PC-9 (cell line): ENCODE measurements at regions of chr2 and their contacts with region 1.

Region 1: GRCh38 chr2:20225294-20226151 is 593 bp upstream of the SDC1 start:
- DNase-seq: peak; percentile 67 to 88
- H3K4me3 ChIP-seq: peak overlapping the region; percentile 93
- H3K27ac ChIP-seq: peak overlapping the region; percentile 61
- H3K4me1 ChIP-seq: peaks cover 39% of the 10 kb centered on the region
- H3K27me3 ChIP-seq: no peaks in the 10 kb centered on the region
- CTCF ChIP-seq: peak; percentile 75

Region 2: DNA sequence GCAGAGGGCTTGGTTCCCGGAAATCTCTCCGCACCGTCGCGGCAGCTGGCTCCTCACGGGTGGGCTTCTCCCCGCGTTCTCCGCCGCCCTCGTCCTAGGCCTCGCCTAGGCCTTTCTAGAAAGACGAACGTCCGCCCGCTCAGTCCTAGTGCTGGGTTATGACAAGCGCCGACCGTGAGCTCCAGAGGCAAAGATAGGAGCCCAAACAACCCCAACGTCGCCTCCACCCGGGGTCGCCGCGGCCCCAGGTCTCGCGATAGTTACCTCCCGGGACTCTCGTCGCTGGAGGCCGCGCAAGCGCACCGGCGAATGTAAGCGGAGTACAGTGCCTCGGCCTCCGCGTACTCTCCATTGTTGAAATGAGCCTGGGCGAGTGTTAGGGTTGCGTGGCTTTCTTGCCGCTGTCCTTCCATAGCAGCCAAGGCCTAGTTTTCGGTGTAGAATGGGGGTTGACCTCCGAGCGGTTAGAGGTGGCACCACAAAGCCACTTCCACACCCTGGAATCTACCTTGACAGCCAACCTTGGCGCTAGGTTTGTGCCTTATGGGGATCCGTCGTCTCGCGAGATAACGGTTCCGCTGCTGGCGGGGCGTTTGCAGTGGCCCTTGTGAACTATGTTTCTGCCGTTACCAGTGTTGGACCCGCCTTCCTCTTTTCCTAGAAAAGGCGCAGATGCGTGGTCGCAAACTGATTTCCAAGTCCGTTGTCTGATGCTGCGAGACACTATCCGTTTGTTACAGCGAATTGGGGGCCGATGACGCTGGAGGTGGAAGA is 323.9 kb before region 1 on chr2 and contains the start of gene TTC32:
- CTCF ChIA-PET with region 1: no interaction called
- POLR2A ChIA-PET with region 1: no interaction called
- intact Hi-C with region 1: no loop called
- DNase-seq: peak; percentile 84 to 91
- H3K4me3 ChIP-seq: peak within 1 kb of the TSS; percentile 74
- H3K27ac ChIP-seq: peak within 1 kb of the TSS; percentile 88
- H3K4me1 ChIP-seq: peaks cover 41% of the 10 kb centered on the region
- H3K27me3 ChIP-seq: no peaks in the 10 kb centered on the region
- CTCF ChIP-seq: no peak
- total RNA-seq, gene TTC32: 27.9 and 36.2 TPM in 2 replicates

Region 3: GRCh38 chr2:20015472-20016083 is 209.9 kb before region 1 on chr2:
- CTCF ChIA-PET with region 1: no interaction called
- POLR2A ChIA-PET with region 1: no interaction called
- intact Hi-C with region 1: loop called (anchors 5 kb)
- DNase-seq: peak in 1 of 2 experiments; percentile 53
- H3K4me3 ChIP-seq: no peak overlapping the region
- H3K27ac ChIP-seq: no peak overlapping the region
- H3K4me1 ChIP-seq: peaks cover 5% of the 10 kb centered on the region; the same call in 1 of the 2 replicates
- H3K27me3 ChIP-seq: peaks cover 9% of the 10 kb centered on the region; the same call in 1 of the 2 replicates
- CTCF ChIP-seq: peak; percentile 82

Region 4: GRCh38 chr2:20106746-20107145 is 118.8 kb before region 1 on chr2:
- CTCF ChIA-PET with region 1: no interaction called
- POLR2A ChIA-PET with region 1: interaction called, 9 read pairs
- intact Hi-C with region 1: loop called (anchors 2 kb)
- DNase-seq: peak; percentile 70 to 83
- H3K4me3 ChIP-seq: peak overlapping the region; percentile 68
- H3K27ac ChIP-seq: peak overlapping the region; percentile 32; the same call in 1 of the 2 replicates
- H3K4me1 ChIP-seq: peaks cover 45% of the 10 kb centered on the region
- H3K27me3 ChIP-seq: no peaks in the 10 kb centered on the region
- CTCF ChIP-seq: peak; percentile 92

Region 5: GRCh38 chr2:20179755-20180594 is 45.5 kb before region 1 on chr2:
- CTCF ChIA-PET with region 1: interaction called, 11 read pairs
- POLR2A ChIA-PET with region 1: interaction called, 3 read pairs
- intact Hi-C with region 1: loop called (anchors 2 kb)
- DNase-seq: peak in 1 of 2 experiments; percentile 80
- H3K4me3 ChIP-seq: no peak overlapping the region
- H3K27ac ChIP-seq: no peak overlapping the region
- H3K4me1 ChIP-seq: peaks cover 28% of the 10 kb centered on the region
- H3K27me3 ChIP-seq: no peaks in the 10 kb centered on the region
- CTCF ChIP-seq: no peak

Region 6: GRCh38 chr2:20186078-20186854 is 39.3 kb before region 1 on chr2:
- CTCF ChIA-PET with region 1: interaction called, 10 read pairs
- POLR2A ChIA-PET with region 1: interaction called, 9 read pairs
- intact Hi-C with region 1: loop called (anchors 2 kb)
- DNase-seq: peak; percentile 74 to 93
- H3K4me3 ChIP-seq: peak overlapping the region; percentile 54
- H3K27ac ChIP-seq: peak overlapping the region; percentile 92
- H3K4me1 ChIP-seq: peaks cover 59% of the 10 kb centered on the region
- H3K27me3 ChIP-seq: no peaks in the 10 kb centered on the region
- CTCF ChIP-seq: no peak

Region 7: GRCh38 chr2:20207051-20207450 is 18.5 kb before region 1 on chr2:
- CTCF ChIA-PET with region 1: interaction called, 4 read pairs
- POLR2A ChIA-PET with region 1: interaction called, 3 read pairs
- intact Hi-C with region 1: loop called (anchors 2 kb)
- DNase-seq: no peak
- H3K4me3 ChIP-seq: no peak overlapping the region
- H3K27ac ChIP-seq: no peak overlapping the region
- H3K4me1 ChIP-seq: peaks cover 9% of the 10 kb centered on the region; the same call in 1 of the 2 replicates
- H3K27me3 ChIP-seq: no peaks in the 10 kb centered on the region
- CTCF ChIP-seq: no peak

Region 8: GRCh38 chr2:20350753-20351554 is 125.4 kb after region 1 on chr2 and contains the start of gene PUM2:
- CTCF ChIA-PET with region 1: no interaction called
- POLR2A ChIA-PET with region 1: no interaction called
- intact Hi-C with region 1: no loop called
- DNase-seq: peak; percentile 90 to 96
- H3K4me3 ChIP-seq: peak within 1 kb of the TSS; percentile 97
- H3K27ac ChIP-seq: peak within 1 kb of the TSS; percentile 88
- H3K4me1 ChIP-seq: peaks cover 47% of the 10 kb centered on the region
- H3K27me3 ChIP-seq: no peaks in the 10 kb centered on the region
- CTCF ChIP-seq: no peak
- total RNA-seq, gene PUM2: 93.3 and 99.3 TPM in 2 replicates